MCF 10A (cell line): ENCODE measurements at regions of chr17 and their contacts with region 1.

Region 1: DNA sequence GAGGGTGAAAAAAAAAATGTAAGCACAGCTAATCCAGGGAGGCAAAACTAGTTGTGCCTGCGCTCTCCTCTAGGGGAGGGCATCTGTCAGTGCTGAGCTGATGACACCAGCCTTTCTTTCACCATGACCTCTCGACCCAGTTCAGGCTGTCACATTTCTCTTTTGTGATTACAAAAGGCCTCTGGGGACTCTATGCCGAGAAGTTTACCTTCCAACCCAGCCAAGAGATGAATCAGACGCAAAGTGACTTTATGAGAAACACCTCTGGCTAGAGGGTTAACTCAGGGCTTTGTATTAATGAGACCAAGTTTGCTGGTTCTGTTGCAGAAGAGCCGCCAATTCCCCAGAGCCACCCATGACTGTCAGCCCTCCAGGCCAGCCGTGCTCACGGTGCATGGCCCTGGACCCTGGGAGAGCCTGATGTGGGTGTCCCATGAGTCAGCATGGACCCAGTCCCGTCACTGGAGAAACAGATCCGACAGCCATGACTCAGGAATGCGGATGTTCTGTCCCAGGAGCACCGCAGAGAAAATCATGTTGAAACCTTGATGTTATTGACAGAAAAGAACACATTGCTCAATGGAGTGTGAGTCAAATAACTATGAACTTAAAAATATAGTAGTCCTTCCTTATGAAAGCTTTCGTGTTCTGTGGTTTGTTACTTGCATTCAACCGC is 437.2 kb downstream of the HS3ST3B1 start:
- DNase-seq: peak; percentile 100
- H3K4me3 Mint-ChIP-seq: peak overlapping the region; percentile 54
- H3K27ac Mint-ChIP-seq: peak overlapping the region; percentile 85
- H3K4me1 Mint-ChIP-seq: peaks cover 30% of the 10 kb centered on the region
- H3K27me3 Mint-ChIP-seq: no peaks in the 10 kb centered on the region
- CTCF ChIP-seq: peak; percentile 36

Region 2: DNA sequence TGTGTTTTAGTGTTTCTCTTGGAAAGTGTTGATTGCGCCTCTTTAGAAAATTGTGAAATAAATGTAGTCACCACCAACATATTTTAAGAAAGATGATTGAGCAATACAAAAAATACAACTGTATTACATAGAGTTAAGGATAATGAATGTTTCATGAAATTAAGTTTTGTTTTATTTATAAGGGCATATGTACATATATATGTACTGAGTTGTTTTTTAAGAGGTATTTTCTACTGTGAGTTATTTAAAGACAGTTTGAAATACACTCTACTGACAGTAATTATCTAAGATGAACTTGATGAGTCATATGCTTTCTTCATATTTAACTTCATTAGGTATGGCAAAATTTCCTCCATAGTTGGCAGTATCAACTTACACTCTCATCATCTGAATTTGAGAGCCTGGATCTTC is 25.5 kb before region 1 on chr17:
- CTCF ChIA-PET with region 1: interaction called, 3 read pairs
- POLR2A ChIA-PET with region 1: interaction called, 18 read pairs
- intact Hi-C with region 1: no loop called
- DNase-seq: peak; percentile 65
- H3K4me3 Mint-ChIP-seq: no peak overlapping the region
- H3K27ac Mint-ChIP-seq: peak overlapping the region; percentile 17
- H3K4me1 Mint-ChIP-seq: peaks cover 14% of the 10 kb centered on the region
- H3K27me3 Mint-ChIP-seq: no peaks in the 10 kb centered on the region
- CTCF ChIP-seq: no peak